CD8-positive, alpha-beta memory T cell (primary cell): ENCODE measurements at regions of chr15 and their contacts with region 1.

Region 1: GRCh38 chr15:69452692-69453521 is at the start of gene RPLP1:
- DNase-seq: peak; percentile 91 to 98 (median 94)
- H3K4me3 ChIP-seq: peak within 1 kb of the TSS; percentile 59
- H3K4me3 Mint-ChIP-seq: peak within 1 kb of the TSS; percentile 90 to 99 (median 95)
- H3K27ac ChIP-seq: peak within 1 kb of the TSS; percentile 94
- H3K27ac Mint-ChIP-seq: peak within 1 kb of the TSS; percentile 87 to 99 (median 98)
- H3K4me1 ChIP-seq: peaks cover 25% of the 10 kb centered on the region
- H3K4me1 Mint-ChIP-seq: peaks cover 36 to 48% (median 42%) of the 10 kb centered on the region in 3 donors
- H3K27me3 ChIP-seq: no peaks in the 10 kb centered on the region
- H3K27me3 Mint-ChIP-seq: peaks cover 0 to 2% of the 10 kb centered on the region in 2 donors
- total RNA-seq, gene RPLP1: 2,216 to 2,332 TPM

Region 2: GRCh38 chr15:69160141-69160993 is 292.5 kb before region 1 on chr15 and contains the start of gene GLCE:
- CTCF ChIA-PET with region 1: no interaction called
- POLR2A ChIA-PET with region 1: interaction called, 13 read pairs
- DNase-seq: peak; percentile 87 to 94 (median 92)
- H3K4me3 ChIP-seq: peak within 1 kb of the TSS; percentile 89
- H3K4me3 Mint-ChIP-seq: peak within 1 kb of the TSS; percentile 92 to 99 (median 96)
- H3K27ac ChIP-seq: peak within 1 kb of the TSS; percentile 32
- H3K27ac Mint-ChIP-seq: peak within 1 kb of the TSS; percentile 78 to 95 (median 90)
- H3K4me1 ChIP-seq: peaks cover 5% of the 10 kb centered on the region
- H3K4me1 Mint-ChIP-seq: peaks cover 13 to 22% (median 16%) of the 10 kb centered on the region in 3 donors
- H3K27me3 ChIP-seq: no peaks in the 10 kb centered on the region
- H3K27me3 Mint-ChIP-seq: peaks cover 2 to 11% of the 10 kb centered on the region in 2 donors
- total RNA-seq, gene GLCE: 5.4 to 5.7 TPM

Region 3: DNA sequence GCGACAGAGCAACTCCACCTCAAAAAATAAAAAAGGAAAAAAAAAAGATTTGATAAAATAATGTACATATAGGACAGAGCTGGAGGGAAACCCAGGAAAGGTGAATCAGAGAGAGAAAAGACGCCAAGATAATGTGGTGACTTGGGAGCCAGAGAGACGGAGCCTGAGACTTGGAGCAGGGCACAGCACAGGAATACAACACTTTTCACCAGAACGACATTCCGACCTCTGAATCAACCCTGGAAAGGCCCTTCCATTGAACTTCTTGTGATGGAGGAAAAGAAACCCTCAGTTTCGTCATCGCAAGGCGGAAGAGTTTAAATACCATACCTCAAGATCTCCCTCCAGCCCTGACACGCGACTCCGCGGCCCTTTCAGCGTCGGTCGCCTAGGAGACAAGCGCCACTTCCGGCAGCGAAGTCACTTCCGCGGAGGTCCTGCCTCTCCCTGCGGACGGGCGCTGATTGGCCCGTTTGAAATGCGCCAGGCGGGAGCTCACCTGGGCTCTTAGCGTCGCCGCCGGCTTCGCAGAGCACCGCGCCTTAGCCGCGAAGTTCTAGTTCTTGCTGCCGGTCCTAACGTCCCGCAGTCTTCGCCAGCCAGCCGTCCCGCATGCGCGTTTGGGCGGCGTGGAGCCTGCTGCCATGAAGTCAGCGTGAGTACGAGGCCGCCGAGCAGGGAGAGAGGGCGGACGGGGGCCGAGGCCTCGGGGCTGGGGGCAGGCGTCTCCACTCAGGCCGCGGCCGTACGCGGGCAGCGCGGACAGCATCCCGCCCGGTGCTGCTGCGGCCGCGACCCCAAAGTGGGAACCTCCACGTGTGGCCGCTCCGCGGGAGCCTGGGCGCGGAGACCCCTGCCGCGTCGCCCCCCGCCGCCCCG is 38.8 kb before region 1 on chr15 and contains the start of gene KIF23:
- CTCF ChIA-PET with region 1: interaction called, 5 read pairs
- POLR2A ChIA-PET with region 1: interaction called, 27 read pairs
- DNase-seq: peak; percentile 88 to 96 (median 90)
- H3K4me3 ChIP-seq: peak within 1 kb of the TSS; percentile 77
- H3K4me3 Mint-ChIP-seq: peak within 1 kb of the TSS; percentile 83 to 93 (median 87)
- H3K27ac ChIP-seq: peak within 1 kb of the TSS; percentile 40
- H3K27ac Mint-ChIP-seq: peak within 1 kb of the TSS in 7 of 8 donors; percentile 16 to 93 (median 75)
- H3K4me1 ChIP-seq: peaks cover 6% of the 10 kb centered on the region
- H3K4me1 Mint-ChIP-seq: peaks cover 8 to 28% (median 18%) of the 10 kb centered on the region in 3 donors
- H3K27me3 ChIP-seq: no peaks in the 10 kb centered on the region
- H3K27me3 Mint-ChIP-seq: peaks cover 7 to 9% of the 10 kb centered on the region in 2 donors
- total RNA-seq, gene KIF23: 36.0 to 44.4 TPM

Region 4: DNA sequence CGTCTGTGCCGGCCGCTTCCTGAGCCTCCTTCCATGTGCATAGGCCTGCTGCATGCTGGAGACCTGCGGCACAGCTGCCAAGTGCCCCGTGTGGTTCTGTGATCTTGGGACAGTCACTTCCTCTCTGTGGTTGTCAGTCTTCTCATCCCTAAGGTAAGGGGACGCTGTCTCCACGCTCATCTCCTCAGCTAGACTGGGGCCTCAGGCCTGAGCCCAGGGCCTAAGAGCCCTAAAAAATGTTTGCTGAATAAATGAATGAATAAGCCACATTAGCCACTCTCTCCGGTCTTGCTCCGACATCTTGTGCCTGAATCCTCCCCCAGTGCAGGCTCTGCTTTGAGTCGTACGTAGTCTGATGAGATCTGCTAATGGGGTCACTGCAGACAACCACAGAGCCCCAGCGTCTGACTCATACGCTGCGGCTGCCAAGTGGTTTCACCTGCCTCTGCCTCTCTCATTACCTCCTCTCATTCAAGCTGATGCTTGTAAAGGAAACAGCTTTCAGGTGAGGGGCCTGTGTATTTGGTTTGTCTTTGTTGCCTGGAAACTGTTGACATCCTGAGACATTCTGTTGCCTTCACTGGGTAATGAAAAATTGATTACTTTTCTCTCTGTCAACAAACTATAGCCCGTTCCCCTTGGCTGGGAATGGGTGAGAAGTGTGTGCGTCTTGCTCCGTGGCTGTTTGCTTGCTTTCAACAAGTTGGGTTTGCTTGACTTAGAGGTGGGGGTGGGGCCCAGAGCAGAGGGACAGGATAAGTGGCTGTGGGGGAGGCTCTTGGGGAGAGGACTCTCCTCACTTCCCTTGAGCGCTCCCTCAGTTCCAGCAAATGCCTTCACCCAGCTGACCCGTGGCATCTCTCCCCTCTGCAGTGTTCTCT is 15.6 kb after region 1 on chr15:
- CTCF ChIA-PET with region 1: interaction called, 121 read pairs
- POLR2A ChIA-PET with region 1: interaction called, 110 read pairs
- DNase-seq: peak; percentile 82 to 96 (median 89)
- H3K4me3 ChIP-seq: peak overlapping the region; percentile 24
- H3K4me3 Mint-ChIP-seq: peak overlapping the region; percentile 54 to 79 (median 70)
- H3K27ac ChIP-seq: peak overlapping the region; percentile 91
- H3K27ac Mint-ChIP-seq: peak overlapping the region; percentile 94 to 100 (median 98)
- H3K4me1 ChIP-seq: peaks cover 29% of the 10 kb centered on the region
- H3K4me1 Mint-ChIP-seq: peaks cover 22 to 46% (median 24%) of the 10 kb centered on the region in 3 donors
- H3K27me3 ChIP-seq: no peaks in the 10 kb centered on the region
- H3K27me3 Mint-ChIP-seq: peaks cover 0 to 1% of the 10 kb centered on the region in 2 donors